CD8-positive, alpha-beta memory T cell (primary cell): ENCODE measurements at regions of chr12 and their contacts with region 1.

Region 1: GRCh38 chr12:121060149-121061001 is 21.3 kb upstream of the OASL start:
- DNase-seq: peak; percentile 44 to 83 (median 62)
- H3K4me3 ChIP-seq: peak overlapping the region; percentile 91
- H3K4me3 Mint-ChIP-seq: peak overlapping the region; percentile 72 to 94 (median 87)
- H3K27ac ChIP-seq: peak overlapping the region; percentile 86
- H3K27ac Mint-ChIP-seq: peak overlapping the region; percentile 89 to 98 (median 96)
- H3K4me1 ChIP-seq: peaks cover 8% of the 10 kb centered on the region
- H3K4me1 Mint-ChIP-seq: peaks cover 12 to 14% (median 13%) of the 10 kb centered on the region in 3 donors
- H3K27me3 ChIP-seq: no peaks in the 10 kb centered on the region
- H3K27me3 Mint-ChIP-seq: no peaks in the 10 kb centered on the region

Region 2: GRCh38 chr12:120783197-120783596 is 277.2 kb before region 1 on chr12:
- CTCF ChIA-PET with region 1: no interaction called
- POLR2A ChIA-PET with region 1: no interaction called
- DNase-seq: no peak
- H3K4me3 ChIP-seq: no peak overlapping the region
- H3K4me3 Mint-ChIP-seq: peak overlapping the region in 5 of 7 donors; percentile 18 to 70 (median 37)
- H3K27ac ChIP-seq: no peak overlapping the region
- H3K27ac Mint-ChIP-seq: peak overlapping the region in 7 of 8 donors; percentile 56 to 84 (median 77)
- H3K4me1 ChIP-seq: peaks cover 14% of the 10 kb centered on the region
- H3K4me1 Mint-ChIP-seq: peaks cover 30 to 47% (median 35%) of the 10 kb centered on the region in 3 donors
- H3K27me3 ChIP-seq: no peaks in the 10 kb centered on the region
- H3K27me3 Mint-ChIP-seq: no peaks in the 10 kb centered on the region

Region 3: GRCh38 chr12:120971299-120972179 is 88.8 kb before region 1 on chr12:
- CTCF ChIA-PET with region 1: interaction called, 11 read pairs
- POLR2A ChIA-PET with region 1: no interaction called
- DNase-seq: peak in 2 of 5 donors; percentile 48 to 66
- H3K4me3 ChIP-seq: no peak overlapping the region
- H3K4me3 Mint-ChIP-seq: no peak overlapping the region
- H3K27ac ChIP-seq: no peak overlapping the region
- H3K27ac Mint-ChIP-seq: peak overlapping the region in 1 of 8 donors; percentile 20
- H3K4me1 ChIP-seq: no peaks in the 10 kb centered on the region
- H3K4me1 Mint-ChIP-seq: peaks cover 0 to 4% (median 2%) of the 10 kb centered on the region in 3 donors
- H3K27me3 ChIP-seq: no peaks in the 10 kb centered on the region
- H3K27me3 Mint-ChIP-seq: no peaks in the 10 kb centered on the region

Region 4: GRCh38 chr12:121005346-121005815 is 55.0 kb before region 1 on chr12:
- CTCF ChIA-PET with region 1: interaction called, 36 read pairs
- POLR2A ChIA-PET with region 1: interaction called, 15 read pairs
- DNase-seq: peak; percentile 11 to 55 (median 28)
- H3K4me3 ChIP-seq: no peak overlapping the region
- H3K4me3 Mint-ChIP-seq: no peak overlapping the region
- H3K27ac ChIP-seq: no peak overlapping the region
- H3K27ac Mint-ChIP-seq: peak overlapping the region in 3 of 8 donors; percentile 9 to 45 (median 17)
- H3K4me1 ChIP-seq: no peaks in the 10 kb centered on the region
- H3K4me1 Mint-ChIP-seq: peaks cover 0 to 3% (median 0%) of the 10 kb centered on the region in 3 donors
- H3K27me3 ChIP-seq: no peaks in the 10 kb centered on the region
- H3K27me3 Mint-ChIP-seq: no peaks in the 10 kb centered on the region

Region 5: GRCh38 chr12:121015825-121016766 is 44.3 kb before region 1 on chr12 and contains the start of gene C12orf43:
- CTCF ChIA-PET with region 1: interaction called, 12 read pairs
- POLR2A ChIA-PET with region 1: no interaction called
- DNase-seq: peak; percentile 85 to 94 (median 85)
- H3K4me3 ChIP-seq: peak within 1 kb of the TSS; percentile 81
- H3K4me3 Mint-ChIP-seq: peak within 1 kb of the TSS; percentile 90 to 98 (median 96)
- H3K27ac ChIP-seq: peak within 1 kb of the TSS; percentile 69
- H3K27ac Mint-ChIP-seq: peak within 1 kb of the TSS; percentile 76 to 100 (median 96)
- H3K4me1 ChIP-seq: peaks cover 11% of the 10 kb centered on the region
- H3K4me1 Mint-ChIP-seq: peaks cover 21 to 32% (median 30%) of the 10 kb centered on the region in 3 donors
- H3K27me3 ChIP-seq: no peaks in the 10 kb centered on the region
- H3K27me3 Mint-ChIP-seq: no peaks in the 10 kb centered on the region
- total RNA-seq, gene C12orf43: 38.1 to 40.3 TPM

Region 6: DNA sequence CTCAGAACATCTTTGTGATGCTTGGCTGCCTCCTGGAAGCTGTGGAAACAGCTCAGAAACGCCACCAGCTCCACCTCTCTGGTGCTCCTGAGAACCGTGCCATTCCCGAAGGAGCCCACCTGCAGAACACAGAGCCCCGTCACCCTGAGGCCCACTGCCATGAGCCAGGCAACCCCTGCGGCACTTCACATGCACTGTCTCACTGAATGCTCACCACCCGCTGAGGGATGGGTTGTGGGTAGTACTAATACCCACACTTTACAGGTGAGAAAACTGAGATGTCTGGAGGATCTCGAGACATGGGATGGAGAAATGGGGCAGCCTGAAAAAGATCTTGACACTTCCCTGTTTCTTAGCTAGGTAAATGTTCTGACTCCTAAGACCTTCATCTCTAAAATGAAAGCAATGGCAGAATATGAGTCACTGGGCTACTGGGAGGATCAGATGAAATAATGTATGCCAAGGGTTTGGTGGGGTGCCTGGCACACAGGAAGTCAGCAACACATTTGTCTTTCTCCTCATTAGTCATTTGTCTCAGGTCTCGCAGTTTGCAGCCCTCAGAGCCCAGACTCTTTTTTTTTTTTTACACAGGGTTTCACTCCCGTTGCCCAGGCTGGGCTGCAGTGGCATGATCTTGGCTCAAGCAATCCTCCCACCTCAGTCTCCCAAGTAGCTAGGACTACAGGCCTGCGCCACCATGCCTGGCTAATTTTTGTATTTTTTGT is 26.6 kb before region 1 on chr12:
- CTCF ChIA-PET with region 1: interaction called, 25 read pairs
- POLR2A ChIA-PET with region 1: interaction called, 7 read pairs
- DNase-seq: peak; percentile 42 to 82 (median 54)
- H3K4me3 ChIP-seq: peak overlapping the region; percentile 40
- H3K4me3 Mint-ChIP-seq: peak overlapping the region; percentile 64 to 98 (median 78)
- H3K27ac ChIP-seq: peak overlapping the region; percentile 66
- H3K27ac Mint-ChIP-seq: peak overlapping the region; percentile 89 to 99 (median 97)
- H3K4me1 ChIP-seq: peaks cover 60% of the 10 kb centered on the region
- H3K4me1 Mint-ChIP-seq: peaks cover 50 to 68% (median 53%) of the 10 kb centered on the region in 3 donors
- H3K27me3 ChIP-seq: no peaks in the 10 kb centered on the region
- H3K27me3 Mint-ChIP-seq: no peaks in the 10 kb centered on the region

Region 7: GRCh38 chr12:121095544-121096198 is 35.3 kb after region 1 on chr12:
- CTCF ChIA-PET with region 1: interaction called, 93 read pairs
- POLR2A ChIA-PET with region 1: interaction called, 3 read pairs
- DNase-seq: peak; percentile 69 to 84 (median 73)
- H3K4me3 ChIP-seq: peak overlapping the region; percentile 57
- H3K4me3 Mint-ChIP-seq: peak overlapping the region; percentile 50 to 93 (median 87)
- H3K27ac ChIP-seq: no peak overlapping the region
- H3K27ac Mint-ChIP-seq: peak overlapping the region in 7 of 8 donors; percentile 6 to 89 (median 79)
- H3K4me1 ChIP-seq: peaks cover 39% of the 10 kb centered on the region
- H3K4me1 Mint-ChIP-seq: peaks cover 42 to 55% (median 53%) of the 10 kb centered on the region in 3 donors
- H3K27me3 ChIP-seq: no peaks in the 10 kb centered on the region
- H3K27me3 Mint-ChIP-seq: peaks cover 4% of the 10 kb centered on the region in 2 donors

Region 8: DNA sequence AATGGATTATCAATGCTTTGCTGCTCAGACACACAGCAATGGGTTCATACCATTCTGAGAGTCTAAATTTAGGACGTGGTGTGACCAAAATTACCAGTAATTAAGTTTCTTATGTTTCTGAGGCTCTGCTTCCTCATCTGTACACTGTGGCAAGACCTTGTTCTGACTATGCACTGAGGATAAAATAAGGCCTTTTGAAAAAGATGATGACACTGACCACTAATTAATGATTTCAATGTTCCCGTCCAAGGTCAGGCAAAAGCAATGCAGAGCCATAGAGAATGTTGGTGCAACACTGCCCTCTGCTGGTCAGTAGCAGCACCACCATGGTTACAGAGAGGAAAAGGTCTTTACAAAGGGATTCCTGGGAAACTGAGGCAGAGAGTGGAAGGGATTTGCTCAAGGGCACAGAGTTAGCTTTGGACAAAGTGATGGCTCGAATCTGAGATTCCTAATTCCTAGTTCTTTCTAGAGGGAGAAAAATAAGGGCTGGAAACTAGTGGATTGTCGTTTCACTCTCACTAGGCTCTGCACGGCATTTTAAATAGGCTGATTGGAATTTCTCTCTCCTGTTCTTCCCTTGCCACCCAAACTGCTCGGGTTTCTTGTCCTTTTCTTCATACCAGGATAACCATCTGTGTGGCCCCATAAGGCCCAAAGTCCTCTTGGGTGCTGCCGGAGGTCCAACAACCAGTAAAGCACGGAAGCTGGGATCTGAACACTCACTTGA is 50.0 kb after region 1 on chr12:
- CTCF ChIA-PET with region 1: interaction called, 15 read pairs
- POLR2A ChIA-PET with region 1: interaction called, 6 read pairs
- DNase-seq: peak; percentile 47 to 76 (median 52)
- H3K4me3 ChIP-seq: no peak overlapping the region
- H3K4me3 Mint-ChIP-seq: no peak overlapping the region
- H3K27ac ChIP-seq: no peak overlapping the region
- H3K27ac Mint-ChIP-seq: no peak overlapping the region
- H3K4me1 ChIP-seq: no peaks in the 10 kb centered on the region
- H3K4me1 Mint-ChIP-seq: peaks cover 3 to 9% (median 5%) of the 10 kb centered on the region in 3 donors
- H3K27me3 ChIP-seq: no peaks in the 10 kb centered on the region
- H3K27me3 Mint-ChIP-seq: no peaks in the 10 kb centered on the region